ENCODE measurements at regions of chr5 and their contacts with region 1.

Region 1: DNA sequence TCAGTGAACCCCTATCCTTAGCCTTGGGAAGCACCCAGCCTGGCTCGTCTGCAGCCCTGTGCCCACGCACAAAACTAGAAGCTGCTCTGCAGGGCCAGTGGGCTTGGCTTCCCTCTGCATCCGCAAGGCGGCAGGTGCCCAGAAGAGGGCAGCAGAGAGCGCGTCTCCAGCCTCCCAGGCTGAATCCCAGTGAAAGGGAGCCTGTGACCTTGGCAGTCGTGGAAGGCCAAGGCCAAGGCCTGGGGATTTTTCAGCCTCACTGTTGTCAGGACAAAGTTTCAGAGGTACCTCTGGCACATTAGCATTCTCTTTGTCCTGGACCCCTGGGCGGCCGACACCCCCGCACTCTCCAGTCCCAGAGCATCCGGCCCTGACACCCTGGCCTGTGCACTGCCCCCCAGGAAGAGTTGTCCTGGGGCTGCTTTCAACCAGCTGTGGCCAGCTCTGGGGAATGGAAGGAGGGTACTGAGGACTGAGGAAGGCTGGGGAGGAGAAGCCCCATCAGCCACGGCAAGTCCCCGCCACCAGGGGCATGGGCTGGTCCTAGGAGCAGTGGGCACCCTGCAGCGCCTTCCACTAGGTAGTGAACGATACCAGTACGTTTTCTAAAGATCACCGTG is 63.6 kb upstream of the IL17B start:
- DNase-seq: peak; percentile 88
- H3K4me3 Mint-ChIP-seq: peak overlapping the region; percentile 41
- H3K27ac Mint-ChIP-seq: peak overlapping the region; percentile 84
- H3K4me1 Mint-ChIP-seq: peaks cover 65% of the 10 kb centered on the region
- H3K27me3 Mint-ChIP-seq: no peaks in the 10 kb centered on the region
- CTCF ChIP-seq: peak; percentile 96

Region 2: DNA sequence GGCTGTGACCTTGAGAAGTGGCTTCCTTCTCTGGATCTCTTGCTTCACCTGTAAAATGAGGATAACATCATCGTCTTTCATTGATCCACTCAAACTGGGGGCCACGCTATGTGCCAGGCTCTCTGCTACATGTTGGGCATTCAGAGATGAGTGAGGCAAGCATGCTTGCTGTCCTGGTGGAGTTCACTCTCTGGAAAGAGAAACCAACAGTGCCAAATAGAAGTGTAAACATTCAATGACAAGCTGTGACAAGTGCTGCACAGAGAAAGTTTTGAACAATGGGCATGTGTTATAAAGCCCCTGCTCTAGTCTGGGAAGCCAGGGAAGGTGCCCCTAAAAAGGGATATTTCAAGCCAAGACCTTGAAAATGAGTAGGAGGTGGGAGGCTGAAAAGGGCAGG is 221.9 kb before region 1 on chr5:
- CTCF ChIA-PET with region 1: no interaction called
- POLR2A ChIA-PET with region 1: no interaction called
- intact Hi-C with region 1: no loop called
- DNase-seq: no peak
- H3K4me3 Mint-ChIP-seq: no peak overlapping the region
- H3K27ac Mint-ChIP-seq: peak overlapping the region; percentile 74
- H3K4me1 Mint-ChIP-seq: no peaks in the 10 kb centered on the region
- H3K27me3 Mint-ChIP-seq: no peaks in the 10 kb centered on the region
- CTCF ChIP-seq: no peak

Region 3: DNA sequence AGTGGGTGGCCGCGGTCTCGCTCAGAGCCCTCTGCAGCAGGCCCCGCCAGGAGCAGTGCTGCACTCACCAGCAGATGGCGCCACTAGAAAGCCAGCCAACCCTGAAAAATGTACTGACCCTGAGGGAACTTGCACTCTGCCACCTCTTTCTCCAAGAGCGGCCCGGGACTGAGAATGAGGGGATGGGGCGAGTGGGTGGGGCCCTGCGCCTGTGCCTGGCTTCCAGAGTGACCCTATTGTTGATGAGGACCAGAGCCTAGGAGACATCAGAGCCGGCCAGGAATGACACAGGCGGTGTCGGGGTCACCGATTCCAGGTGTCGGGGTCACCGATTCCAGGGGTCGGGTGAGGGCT is 60.7 kb before region 1 on chr5:
- CTCF ChIA-PET with region 1: interaction called, 662 read pairs
- POLR2A ChIA-PET with region 1: interaction called, 4 read pairs
- intact Hi-C with region 1: no loop called
- DNase-seq: peak; percentile 78
- H3K4me3 Mint-ChIP-seq: no peak overlapping the region
- H3K27ac Mint-ChIP-seq: no peak overlapping the region
- H3K4me1 Mint-ChIP-seq: no peaks in the 10 kb centered on the region
- H3K27me3 Mint-ChIP-seq: no peaks in the 10 kb centered on the region
- CTCF ChIP-seq: peak; percentile 97

Region 4: GRCh38 chr5:149485655-149486425 is 43.2 kb after region 1 on chr5:
- CTCF ChIA-PET with region 1: interaction called, 103 read pairs
- POLR2A ChIA-PET with region 1: interaction called, 1,058 read pairs
- intact Hi-C with region 1: loop called (anchors 1 kb)
- DNase-seq: peak; percentile 97
- H3K4me3 Mint-ChIP-seq: no peak overlapping the region
- H3K27ac Mint-ChIP-seq: peak overlapping the region; percentile 98
- H3K4me1 Mint-ChIP-seq: peaks cover 57% of the 10 kb centered on the region
- H3K27me3 Mint-ChIP-seq: no peaks in the 10 kb centered on the region
- CTCF ChIP-seq: no peak

Region 5: DNA sequence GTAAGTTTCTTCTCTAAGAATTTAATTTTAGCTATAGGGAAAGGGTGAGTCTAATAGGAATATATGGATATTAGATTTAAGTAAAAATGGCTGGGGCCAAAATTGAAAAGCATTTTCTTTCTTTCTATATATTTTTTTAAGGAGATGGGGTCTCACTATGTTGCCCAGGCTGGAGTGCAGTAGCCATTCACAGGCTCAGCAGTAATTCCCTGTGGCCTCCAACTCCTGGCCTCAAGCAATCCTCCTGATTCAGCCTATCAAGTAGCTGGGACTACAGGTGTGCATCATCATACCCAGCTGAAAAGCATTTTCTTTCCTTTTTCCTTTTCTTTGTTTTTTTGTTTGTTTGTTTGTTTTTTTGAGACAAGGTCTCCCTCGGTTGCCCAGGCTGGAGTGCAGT is 67.5 kb after region 1 on chr5:
- CTCF ChIA-PET with region 1: interaction called, 11 read pairs
- POLR2A ChIA-PET with region 1: interaction called, 8 read pairs
- intact Hi-C with region 1: no loop called
- DNase-seq: no peak
- H3K4me3 Mint-ChIP-seq: no peak overlapping the region
- H3K27ac Mint-ChIP-seq: no peak overlapping the region
- H3K4me1 Mint-ChIP-seq: peaks cover 8% of the 10 kb centered on the region
- H3K27me3 Mint-ChIP-seq: no peaks in the 10 kb centered on the region
- CTCF ChIP-seq: no peak

Region 6: GRCh38 chr5:149544028-149544420 is 101.4 kb after region 1 on chr5:
- CTCF ChIA-PET with region 1: interaction called, 202 read pairs
- POLR2A ChIA-PET with region 1: interaction called, 192 read pairs
- intact Hi-C with region 1: no loop called
- DNase-seq: no peak
- H3K4me3 Mint-ChIP-seq: peak overlapping the region; percentile 14
- H3K27ac Mint-ChIP-seq: no peak overlapping the region
- H3K4me1 Mint-ChIP-seq: peaks cover 33% of the 10 kb centered on the region
- H3K27me3 Mint-ChIP-seq: no peaks in the 10 kb centered on the region
- CTCF ChIP-seq: no peak

Region 7: DNA sequence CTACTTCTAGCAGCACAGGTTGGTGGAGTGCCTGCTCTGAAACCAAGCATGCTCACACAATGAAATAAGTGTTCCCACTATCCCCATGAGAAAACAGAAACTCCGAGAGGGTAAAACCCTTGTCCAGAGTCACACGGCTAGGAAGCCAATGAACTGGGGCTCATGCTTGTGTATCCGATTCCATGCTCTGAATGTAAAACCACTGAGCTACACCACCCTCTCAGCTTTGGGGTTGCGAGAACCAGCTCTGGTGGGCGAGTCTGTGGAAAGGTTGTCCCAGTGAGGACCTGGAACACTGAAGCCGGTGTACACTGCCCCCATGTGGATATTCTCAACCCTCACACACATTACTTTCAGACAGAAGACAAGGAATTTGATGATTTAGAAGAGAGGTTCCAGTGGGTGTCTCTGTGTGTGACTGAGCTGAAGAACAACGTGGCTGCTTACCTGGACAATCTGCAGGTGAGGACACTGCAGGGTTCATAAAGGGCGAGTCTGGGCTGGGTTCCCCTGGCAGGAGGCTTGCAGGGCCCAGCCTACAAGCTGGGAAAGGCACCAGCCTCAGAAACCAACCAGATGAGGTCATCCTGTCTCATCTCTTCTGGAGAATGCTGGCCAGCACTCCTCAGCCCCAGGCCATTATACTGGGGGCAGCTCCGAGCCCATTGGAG is 176.0 kb after region 1 on chr5:
- CTCF ChIA-PET with region 1: interaction called, 28 read pairs
- POLR2A ChIA-PET with region 1: interaction called, 10 read pairs
- intact Hi-C with region 1: loop called (anchors 1 kb)
- DNase-seq: peak; percentile 86
- H3K4me3 Mint-ChIP-seq: no peak overlapping the region
- H3K27ac Mint-ChIP-seq: peak overlapping the region; percentile 28
- H3K4me1 Mint-ChIP-seq: peaks cover 16% of the 10 kb centered on the region
- H3K27me3 Mint-ChIP-seq: no peaks in the 10 kb centered on the region
- CTCF ChIP-seq: peak; percentile 92

Region 8: GRCh38 chr5:149749481-149750365 is 307.1 kb after region 1 on chr5:
- CTCF ChIA-PET with region 1: no interaction called
- POLR2A ChIA-PET with region 1: no interaction called
- intact Hi-C with region 1: no loop called
- DNase-seq: peak; percentile 90
- H3K4me3 Mint-ChIP-seq: peak overlapping the region; percentile 45
- H3K27ac Mint-ChIP-seq: peak overlapping the region; percentile 63
- H3K4me1 Mint-ChIP-seq: peaks cover 64% of the 10 kb centered on the region
- H3K27me3 Mint-ChIP-seq: no peaks in the 10 kb centered on the region
- CTCF ChIP-seq: no peak